HCT116 (cell line): ENCODE measurements at regions of chr9 and their contacts with region 1.

Region 1: DNA sequence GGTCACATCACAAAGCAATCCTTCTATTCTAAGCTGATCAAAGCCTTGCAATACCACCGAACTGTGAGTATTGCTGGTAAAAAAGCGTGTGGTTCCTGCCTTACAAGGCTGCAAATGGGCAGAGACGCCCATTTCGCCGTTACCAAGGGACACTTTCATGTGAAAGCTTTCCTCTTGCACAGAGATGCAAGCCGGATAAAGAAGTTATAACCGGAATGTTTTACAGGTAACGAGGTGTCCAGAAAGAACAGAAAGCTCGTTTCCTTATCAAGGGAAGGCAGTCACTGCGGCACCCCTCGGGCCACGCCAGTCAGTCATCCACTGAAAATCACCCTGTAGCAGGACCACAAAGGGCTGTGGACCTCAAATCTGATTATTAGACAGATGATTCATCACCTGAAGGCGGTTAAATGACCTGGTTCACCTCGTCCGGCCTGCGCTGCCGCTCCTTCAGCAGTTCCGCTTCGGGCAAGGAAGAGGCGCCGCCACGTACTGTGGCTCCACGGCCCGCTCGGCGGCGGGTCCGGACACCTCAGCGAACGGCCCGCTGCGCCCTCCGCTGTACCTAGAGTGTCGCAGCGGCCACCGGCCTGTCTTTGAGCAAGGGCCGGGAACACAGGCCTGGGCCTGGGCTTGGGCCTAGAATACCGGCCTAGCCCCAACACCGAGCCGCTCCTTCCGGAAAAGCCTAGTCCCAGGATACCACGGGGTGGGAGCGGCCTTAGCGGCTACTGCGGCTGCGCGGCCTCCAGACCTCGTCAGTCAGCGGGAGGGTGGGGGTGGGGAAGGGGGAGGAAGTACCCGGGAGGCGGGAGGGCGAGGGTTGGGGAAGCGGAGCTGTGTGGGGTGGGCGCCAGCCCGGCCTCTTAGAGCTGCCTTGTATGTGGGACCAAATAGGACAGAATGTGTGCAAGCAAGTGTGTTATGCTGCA is at the start of gene KLHL9:
- DNase-seq: peak; percentile 83
- ATAC-seq: peak; percentile 96
- H3K4me3 ChIP-seq: peak within 1 kb of the TSS; percentile 85 to 98
- H3K27ac ChIP-seq: peak within 1 kb of the TSS; percentile 82
- H3K4me1 ChIP-seq: peaks cover 3 to 23% of the 10 kb centered on the region in 2 experiments; a peak in 3 of 4 replicates
- H3K27me3 ChIP-seq: no peaks in the 10 kb centered on the region
- CTCF ChIP-seq: no peak
- POLR2A ChIP-seq: peak; percentile 46
- RAD21 ChIP-seq: no peak
- total RNA-seq, gene KLHL9: 16.4 TPM

Region 2: GRCh38 chr9:21244836-21245235 is 90.1 kb before region 1 on chr9:
- CTCF ChIA-PET with region 1: no interaction called
- POLR2A ChIA-PET with region 1: no interaction called
- RAD21 ChIA-PET with region 1: no interaction called
- intact Hi-C with region 1: no loop called
- DNase-seq: no peak
- ATAC-seq: no peak
- H3K4me3 ChIP-seq: no peak overlapping the region
- H3K27ac ChIP-seq: no peak overlapping the region
- H3K4me1 ChIP-seq: no peaks in the 10 kb centered on the region
- H3K27me3 ChIP-seq: no peaks in the 10 kb centered on the region
- CTCF ChIP-seq: no peak
- POLR2A ChIP-seq: no peak
- RAD21 ChIP-seq: no peak

Region 3: DNA sequence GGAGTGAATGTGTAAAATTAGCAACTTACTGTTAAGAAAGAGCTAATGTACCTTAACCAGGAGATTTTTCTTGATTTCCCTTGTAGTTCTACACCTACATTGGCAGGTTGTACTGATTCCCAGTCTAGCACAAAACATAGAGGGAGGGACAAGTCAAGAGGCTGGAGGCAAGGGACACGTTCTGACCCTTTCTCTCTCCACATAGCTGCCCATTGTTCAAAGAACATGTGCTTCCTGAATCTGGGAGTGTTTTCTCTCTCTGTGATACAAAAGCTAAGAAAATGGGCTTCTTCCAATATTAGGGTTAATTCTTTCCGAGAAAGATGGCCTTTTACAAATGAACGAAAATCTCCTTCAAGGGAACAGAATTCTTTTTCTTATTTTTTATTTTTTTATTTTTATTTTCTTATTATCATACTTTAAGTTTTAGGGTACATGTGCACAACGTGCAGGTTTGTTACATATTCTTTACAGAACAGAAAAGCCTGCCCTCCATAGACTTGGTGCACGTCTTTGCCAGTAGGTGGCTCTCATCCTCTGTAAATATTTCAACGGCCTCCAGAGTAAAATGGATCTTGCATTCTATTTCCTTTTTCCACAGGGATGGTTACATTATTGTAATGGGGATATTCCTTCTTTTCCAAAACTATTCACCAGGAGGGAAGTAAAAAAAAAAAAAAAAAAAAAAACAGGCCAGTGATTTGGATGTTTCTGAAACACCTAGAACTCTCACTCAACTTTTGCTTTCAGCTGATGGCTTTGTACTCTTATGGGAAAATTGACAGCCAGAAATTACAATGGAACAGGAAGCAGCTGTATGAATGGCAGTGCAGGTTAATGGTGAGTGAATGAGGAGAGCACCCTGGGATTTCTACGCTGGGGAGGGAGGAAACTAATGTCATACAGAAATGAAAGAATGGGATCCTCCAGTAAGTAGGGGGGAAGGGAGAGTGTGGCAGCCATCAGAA is 16.7 kb before region 1 on chr9:
- CTCF ChIA-PET with region 1: interaction called, 10 read pairs
- POLR2A ChIA-PET with region 1: interaction called, 5 read pairs
- RAD21 ChIA-PET with region 1: no interaction called
- intact Hi-C with region 1: no loop called
- DNase-seq: no peak
- ATAC-seq: peak; percentile 89
- H3K4me3 ChIP-seq: no peak overlapping the region
- H3K27ac ChIP-seq: no peak overlapping the region
- H3K4me1 ChIP-seq: peaks cover 3 to 10% of the 10 kb centered on the region in 2 experiments; a peak in 3 of 4 replicates
- H3K27me3 ChIP-seq: no peaks in the 10 kb centered on the region
- CTCF ChIP-seq: peak; percentile 54 to 68 (median 63); a peak in 5 of 6 replicates
- POLR2A ChIP-seq: no peak
- RAD21 ChIP-seq: peak; percentile 69